Dendritic cell treated with granulocyte-macrophage colony-stimulating factor and Interleukin-4, amounts not matched to agents 40 ng/mL and 50 ng/mL, for 4 days (primary cell): ENCODE measurements at regions of chr9 and their contacts with region 1.

Region 1: DNA sequence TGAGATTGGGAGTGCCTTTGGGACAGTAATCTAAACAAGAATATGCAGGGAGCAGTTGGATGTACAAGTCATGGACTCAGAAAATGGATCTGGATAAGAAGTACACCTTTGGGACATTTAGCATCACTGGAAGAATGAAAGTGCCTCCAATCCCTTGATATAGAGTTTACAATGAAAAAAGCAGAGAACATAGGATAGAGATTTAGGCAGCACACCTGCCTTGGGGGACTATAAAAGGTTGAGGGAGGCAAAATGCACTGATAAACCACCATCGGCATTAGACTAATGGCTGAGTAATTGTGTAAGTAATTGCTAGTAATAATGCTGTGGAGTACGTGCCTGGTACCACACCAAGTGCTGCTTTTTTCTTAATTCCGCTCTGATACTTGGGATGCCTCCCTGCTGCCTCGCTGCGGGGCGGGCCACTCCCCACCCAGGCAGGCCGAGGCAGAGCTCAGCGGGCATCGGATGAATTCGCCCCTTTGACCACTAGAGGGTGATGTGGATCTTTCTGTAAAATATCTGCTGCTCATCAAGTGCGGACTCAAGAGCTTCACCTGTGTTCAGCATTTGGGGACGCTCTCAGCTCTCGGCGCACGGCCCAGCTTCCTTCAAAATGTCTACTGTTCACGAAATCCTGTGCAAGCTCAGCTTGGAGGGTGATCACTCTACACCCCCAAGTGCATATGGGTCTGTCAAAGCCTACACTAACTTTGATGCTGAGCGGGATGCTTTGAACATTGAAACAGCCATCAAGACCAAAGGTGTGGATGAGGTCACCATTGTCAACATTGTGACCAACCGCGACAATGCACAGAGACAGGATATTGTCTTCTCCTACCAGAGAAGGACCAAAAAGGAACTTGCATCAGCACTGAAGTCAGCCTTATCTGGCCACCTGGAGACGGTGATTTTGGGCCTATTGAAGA is 99.9 kb downstream of the ANKRD18B start:
- H3K4me3 Mint-ChIP-seq: no peak overlapping the region
- H3K27ac Mint-ChIP-seq: no peak overlapping the region
- H3K4me1 Mint-ChIP-seq: peaks cover 8% of the 10 kb centered on the region
- H3K27me3 Mint-ChIP-seq: peaks cover 19% of the 10 kb centered on the region

Region 2: DNA sequence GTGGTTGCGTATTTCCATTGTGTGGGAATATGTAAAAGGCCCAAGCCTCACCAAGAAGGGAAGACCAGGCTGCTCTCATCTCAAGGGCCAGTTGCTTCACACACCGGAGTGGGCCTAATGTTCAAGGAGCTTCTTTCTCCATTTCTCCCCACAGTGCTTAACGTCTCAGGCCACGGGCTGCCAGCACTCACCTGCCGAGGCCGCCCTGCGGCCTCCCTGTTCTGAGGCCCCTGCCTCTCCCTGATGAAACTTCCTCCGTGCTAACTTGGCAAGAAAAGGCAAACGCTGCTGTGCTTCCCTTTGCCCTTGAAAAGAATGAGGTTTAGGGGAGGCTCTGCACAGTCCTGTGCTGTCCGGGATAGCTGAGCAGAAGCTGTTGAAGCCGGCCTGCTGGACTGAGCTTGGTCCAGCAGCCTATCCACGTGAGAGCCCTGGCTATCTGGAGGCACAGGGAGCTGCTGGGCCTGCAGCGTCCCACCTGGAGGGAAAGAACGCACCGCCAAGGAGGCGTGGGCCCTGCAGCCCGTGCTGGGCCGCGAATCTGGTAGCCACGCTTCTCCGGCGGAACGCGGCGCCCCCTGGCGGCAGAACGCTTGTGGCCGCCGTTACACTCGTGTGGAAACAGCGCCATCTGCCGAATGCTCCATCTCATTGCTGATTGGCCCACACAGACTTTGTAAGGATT is 97.9 kb after region 1 on chr9:
- intact Hi-C with region 1: loop called (anchors 1 kb)
- H3K4me3 Mint-ChIP-seq: no peak overlapping the region
- H3K27ac Mint-ChIP-seq: no peak overlapping the region
- H3K4me1 Mint-ChIP-seq: peaks cover 28% of the 10 kb centered on the region
- H3K27me3 Mint-ChIP-seq: peaks cover 12% of the 10 kb centered on the region

Region 3: GRCh38 chr9:34328987-34329832 is 705.3 kb after region 1 on chr9 and contains the starts of genes KIF24 and NUDT2:
- intact Hi-C with region 1: no loop called
- H3K4me3 Mint-ChIP-seq: peak within 1 kb of the TSS; percentile 90
- H3K27ac Mint-ChIP-seq: peak within 1 kb of the TSS; percentile 95
- H3K4me1 Mint-ChIP-seq: peaks cover 43% of the 10 kb centered on the region
- H3K27me3 Mint-ChIP-seq: no peaks in the 10 kb centered on the region